CD8-positive, alpha-beta T cell (primary cell): ENCODE measurements at regions of chr21 and their contacts with region 1.

Region 1: GRCh38 chr21:35438643-35439404 is 389.7 kb upstream of the RUNX1 start:
- DNase-seq: peak in 1 of 9 experiments; percentile 10
- ATAC-seq: peak; percentile 36
- H3K4me3 ChIP-seq: no peak overlapping the region
- H3K4me3 Mint-ChIP-seq: peak overlapping the region; percentile 13
- H3K27ac ChIP-seq: no peak overlapping the region
- H3K27ac Mint-ChIP-seq: peak overlapping the region; percentile 45
- H3K4me1 ChIP-seq: peaks cover 9% of the 10 kb centered on the region
- H3K4me1 Mint-ChIP-seq: peaks cover 26% of the 10 kb centered on the region
- H3K27me3 ChIP-seq: no peaks in the 10 kb centered on the region
- H3K27me3 Mint-ChIP-seq: peaks cover 3% of the 10 kb centered on the region
- CTCF ChIP-seq: no peak

Region 2: GRCh38 chr21:35303085-35303484 is 135.7 kb before region 1 on chr21:
- CTCF ChIA-PET with region 1: interaction called, 3 read pairs
- POLR2A ChIA-PET with region 1: no interaction called
- intact Hi-C with region 1: loop called in 1 of 2 experiments (anchors 1 kb)
- DNase-seq: no peak
- ATAC-seq: no peak
- H3K4me3 ChIP-seq: no peak overlapping the region
- H3K4me3 Mint-ChIP-seq: no peak overlapping the region
- H3K27ac ChIP-seq: no peak overlapping the region
- H3K27ac Mint-ChIP-seq: no peak overlapping the region
- H3K4me1 ChIP-seq: no peaks in the 10 kb centered on the region
- H3K4me1 Mint-ChIP-seq: no peaks in the 10 kb centered on the region
- H3K27me3 ChIP-seq: no peaks in the 10 kb centered on the region
- H3K27me3 Mint-ChIP-seq: no peaks in the 10 kb centered on the region
- CTCF ChIP-seq: no peak

Region 3: DNA sequence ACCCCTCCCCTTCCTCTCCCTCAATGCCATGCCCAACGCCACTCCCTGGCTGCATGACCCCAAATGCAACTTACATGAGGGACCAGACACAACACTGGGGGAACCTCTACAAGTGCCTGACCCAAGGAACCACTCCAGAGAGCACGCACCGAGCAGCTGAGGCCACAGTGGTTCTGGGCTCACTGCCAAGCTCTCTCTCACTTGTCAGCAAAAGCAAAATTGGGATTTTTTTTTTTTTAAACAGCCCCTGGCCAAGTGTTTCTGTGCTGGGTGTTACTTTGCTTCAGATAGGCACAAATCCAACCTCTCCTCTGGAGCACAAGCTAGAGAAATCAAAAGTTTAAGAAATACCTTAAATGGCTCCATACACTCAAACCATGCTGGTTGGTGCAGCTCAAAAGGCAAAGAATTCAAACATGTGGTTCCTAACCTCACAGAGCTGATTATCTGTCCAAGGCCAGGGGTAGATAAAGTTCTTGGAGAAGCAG is 258.5 kb after region 1 on chr21:
- CTCF ChIA-PET with region 1: no interaction called
- POLR2A ChIA-PET with region 1: no interaction called
- intact Hi-C with region 1: loop called in 1 of 2 experiments (anchors 10 kb)
- DNase-seq: peak in 5 of 9 experiments; percentile 1 to 34 (median 16)
- ATAC-seq: no peak
- H3K4me3 ChIP-seq: no peak overlapping the region
- H3K4me3 Mint-ChIP-seq: no peak overlapping the region
- H3K27ac ChIP-seq: no peak overlapping the region
- H3K27ac Mint-ChIP-seq: no peak overlapping the region
- H3K4me1 ChIP-seq: peaks cover 8% of the 10 kb centered on the region
- H3K4me1 Mint-ChIP-seq: peaks cover 11% of the 10 kb centered on the region
- H3K27me3 ChIP-seq: no peaks in the 10 kb centered on the region
- H3K27me3 Mint-ChIP-seq: peaks cover 19% of the 10 kb centered on the region
- CTCF ChIP-seq: no peak